Mammary epithelial cell (primary cell): ENCODE measurements at regions of chr9 and their contacts with region 1.

Region 1: DNA sequence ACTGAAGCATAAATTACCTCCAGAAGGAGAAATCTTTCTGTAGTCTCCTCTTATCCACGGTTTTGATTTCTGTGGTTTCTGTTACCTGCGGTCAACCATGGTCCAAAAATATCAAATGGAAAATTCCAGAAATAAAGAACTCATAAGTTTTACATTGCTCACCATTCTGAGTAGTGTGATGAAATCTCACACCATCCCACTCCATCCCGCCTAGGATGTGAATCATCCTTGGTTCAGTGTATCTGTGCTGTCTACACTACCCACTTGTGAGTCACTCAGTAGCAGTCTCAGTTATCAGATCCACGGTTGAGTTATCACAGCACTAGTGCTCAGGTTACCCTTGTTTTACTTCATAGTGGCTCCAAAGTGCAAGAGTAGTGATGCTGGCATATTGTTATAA is 371.2 kb downstream of the NFIB start:
- DNase-seq: peak; percentile 99
- H3K4me3 ChIP-seq: no peak overlapping the region
- H3K27ac ChIP-seq: peak overlapping the region; percentile 78
- H3K4me1 ChIP-seq: peaks cover 47% of the 10 kb centered on the region
- H3K27me3 ChIP-seq: no peaks in the 10 kb centered on the region
- CTCF ChIP-seq: no peak

Region 2: GRCh38 chr9:13865869-13866268 is 76.8 kb before region 1 on chr9:
- CTCF ChIA-PET with region 1: no interaction called
- dilution Hi-C with region 1: no loop called
- in situ Hi-C with region 1: no loop called
- intact Hi-C with region 1: no loop called
- DNase-seq: peak; percentile 26
- H3K4me3 ChIP-seq: no peak overlapping the region
- H3K27ac ChIP-seq: no peak overlapping the region
- H3K4me1 ChIP-seq: peaks cover 3% of the 10 kb centered on the region
- H3K27me3 ChIP-seq: no peaks in the 10 kb centered on the region
- CTCF ChIP-seq: no peak

Region 3: GRCh38 chr9:13879981-13880380 is 62.7 kb before region 1 on chr9:
- CTCF ChIA-PET with region 1: no interaction called
- dilution Hi-C with region 1: no loop called
- in situ Hi-C with region 1: loop called in 1 of 2 experiments (anchors 10 kb)
- intact Hi-C with region 1: no loop called
- DNase-seq: no peak
- H3K4me3 ChIP-seq: no peak overlapping the region
- H3K27ac ChIP-seq: no peak overlapping the region
- H3K4me1 ChIP-seq: no peaks in the 10 kb centered on the region
- H3K27me3 ChIP-seq: no peaks in the 10 kb centered on the region
- CTCF ChIP-seq: no peak

Region 4: DNA sequence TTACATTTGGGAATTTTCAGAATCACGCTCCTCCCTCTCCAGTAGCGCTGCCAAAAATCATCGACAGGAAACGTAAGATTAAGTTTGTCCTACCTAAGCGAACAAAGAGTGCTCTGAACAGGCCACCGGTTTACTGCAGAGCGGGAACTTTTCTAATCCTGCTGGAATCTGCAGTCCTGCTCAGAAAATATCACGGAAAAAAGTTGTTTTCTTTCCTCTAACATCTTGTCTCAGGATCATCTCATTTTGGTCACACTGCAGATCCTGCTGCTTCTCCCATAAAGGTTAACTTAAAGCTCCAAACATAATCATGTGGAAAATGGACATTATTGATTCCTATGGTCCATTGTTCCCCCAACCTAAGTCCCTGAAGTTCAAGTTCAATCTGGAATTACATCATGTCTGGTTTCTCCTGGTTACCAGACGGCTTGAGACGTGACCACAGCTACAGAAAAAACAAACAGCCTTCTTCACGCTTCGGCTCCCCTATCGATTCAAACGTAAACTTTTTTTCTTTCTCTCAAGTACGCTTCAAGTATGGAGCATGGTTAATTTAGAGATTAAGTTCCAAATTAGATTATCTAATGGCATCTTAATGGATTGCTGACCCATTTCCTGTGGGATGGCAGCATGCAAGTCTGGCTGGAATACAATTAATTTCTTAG is 153.7 kb after region 1 on chr9:
- CTCF ChIA-PET with region 1: no interaction called
- dilution Hi-C with region 1: no loop called
- in situ Hi-C with region 1: no loop called
- intact Hi-C with region 1: no loop called
- DNase-seq: peak; percentile 74
- H3K4me3 ChIP-seq: peak overlapping the region in 1 of 3 experiments; percentile 29
- H3K27ac ChIP-seq: peak overlapping the region; percentile 86
- H3K4me1 ChIP-seq: peaks cover 20% of the 10 kb centered on the region
- H3K27me3 ChIP-seq: no peaks in the 10 kb centered on the region
- CTCF ChIP-seq: no peak

Region 5: GRCh38 chr9:14170973-14171596 is 228.4 kb after region 1 on chr9:
- CTCF ChIA-PET with region 1: no interaction called
- dilution Hi-C with region 1: no loop called
- in situ Hi-C with region 1: no loop called
- intact Hi-C with region 1: no loop called
- DNase-seq: peak; percentile 88
- H3K4me3 ChIP-seq: peak overlapping the region in 1 of 3 experiments; percentile 20
- H3K27ac ChIP-seq: peak overlapping the region; percentile 96
- H3K4me1 ChIP-seq: peaks cover 17% of the 10 kb centered on the region
- H3K27me3 ChIP-seq: no peaks in the 10 kb centered on the region
- CTCF ChIP-seq: no peak